B cell (primary cell): ENCODE measurements at regions of chr9 and their contacts with region 1.

Region 1: GRCh38 chr9:90827181-90827871 is 25.7 kb downstream of the SYK start:
- DNase-seq: peak; percentile 86
- ATAC-seq: peak; percentile 68
- H3K4me3 ChIP-seq: peak overlapping the region; percentile 65 to 97 (median 88)
- H3K4me3 Mint-ChIP-seq: peak overlapping the region; percentile 88
- H3K27ac ChIP-seq: peak overlapping the region; percentile 81 to 91
- H3K27ac Mint-ChIP-seq: peak overlapping the region; percentile 86
- H3K4me1 ChIP-seq: peaks cover 72 to 75% of the 10 kb centered on the region in 2 donors
- H3K4me1 Mint-ChIP-seq: peaks cover 89% of the 10 kb centered on the region
- H3K27me3 ChIP-seq: no peaks in the 10 kb centered on the region
- H3K27me3 Mint-ChIP-seq: no peaks in the 10 kb centered on the region
- CTCF ChIP-seq: no peak

Region 2: DNA sequence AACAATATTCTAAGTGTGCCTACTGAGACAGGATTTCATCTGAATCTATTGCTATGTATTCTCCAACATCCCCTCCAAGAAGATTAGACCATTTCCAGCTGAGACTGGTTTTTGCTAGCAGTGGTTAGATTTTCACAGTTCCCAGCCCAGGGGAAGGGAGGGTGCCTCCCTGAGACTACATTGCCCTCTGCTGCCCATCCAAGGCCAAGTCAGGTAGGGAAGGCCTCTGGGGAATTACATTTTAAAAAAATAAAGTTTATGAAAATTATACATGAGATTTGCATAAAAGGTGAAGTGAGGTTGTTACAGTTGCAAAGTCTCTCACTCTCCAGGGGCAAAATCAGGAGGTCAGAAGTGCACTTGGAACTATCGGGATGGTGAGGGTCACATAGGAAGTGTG is 53.7 kb before region 1 on chr9:
- CTCF ChIA-PET with region 1: interaction called, 34 read pairs
- POLR2A ChIA-PET with region 1: interaction called, 9 read pairs
- intact Hi-C with region 1: loop called (anchors 1 kb)
- DNase-seq: peak; percentile 58
- ATAC-seq: peak; percentile 28
- H3K4me3 ChIP-seq: peak overlapping the region in 1 of 5 experiments; percentile 21
- H3K4me3 Mint-ChIP-seq: peak overlapping the region; percentile 38
- H3K27ac ChIP-seq: peak overlapping the region; percentile 37 to 57
- H3K27ac Mint-ChIP-seq: peak overlapping the region; percentile 86
- H3K4me1 ChIP-seq: peaks cover 60 to 67% of the 10 kb centered on the region in 2 donors
- H3K4me1 Mint-ChIP-seq: peaks cover 67% of the 10 kb centered on the region
- H3K27me3 ChIP-seq: no peaks in the 10 kb centered on the region
- H3K27me3 Mint-ChIP-seq: no peaks in the 10 kb centered on the region
- CTCF ChIP-seq: peak; percentile 26

Region 3: GRCh38 chr9:90801583-90802289 is 25.6 kb before region 1 on chr9 and contains the start of gene SYK:
- CTCF ChIA-PET with region 1: interaction called, 44 read pairs
- POLR2A ChIA-PET with region 1: interaction called, 20 read pairs
- intact Hi-C with region 1: loop called (anchors 1 kb)
- DNase-seq: peak; percentile 87
- ATAC-seq: peak; percentile 83
- H3K4me3 ChIP-seq: peak within 1 kb of the TSS; percentile 87 to 98 (median 93)
- H3K4me3 Mint-ChIP-seq: peak within 1 kb of the TSS; percentile 97
- H3K27ac ChIP-seq: peak within 1 kb of the TSS; percentile 87 to 93
- H3K27ac Mint-ChIP-seq: peak within 1 kb of the TSS; percentile 92
- H3K4me1 ChIP-seq: peaks cover 47 to 51% of the 10 kb centered on the region in 2 donors
- H3K4me1 Mint-ChIP-seq: peaks cover 68% of the 10 kb centered on the region
- H3K27me3 ChIP-seq: no peaks in the 10 kb centered on the region
- H3K27me3 Mint-ChIP-seq: no peaks in the 10 kb centered on the region
- CTCF ChIP-seq: no peak
- total RNA-seq, gene SYK: 242 and 251 TPM in 2 replicates

Region 4: DNA sequence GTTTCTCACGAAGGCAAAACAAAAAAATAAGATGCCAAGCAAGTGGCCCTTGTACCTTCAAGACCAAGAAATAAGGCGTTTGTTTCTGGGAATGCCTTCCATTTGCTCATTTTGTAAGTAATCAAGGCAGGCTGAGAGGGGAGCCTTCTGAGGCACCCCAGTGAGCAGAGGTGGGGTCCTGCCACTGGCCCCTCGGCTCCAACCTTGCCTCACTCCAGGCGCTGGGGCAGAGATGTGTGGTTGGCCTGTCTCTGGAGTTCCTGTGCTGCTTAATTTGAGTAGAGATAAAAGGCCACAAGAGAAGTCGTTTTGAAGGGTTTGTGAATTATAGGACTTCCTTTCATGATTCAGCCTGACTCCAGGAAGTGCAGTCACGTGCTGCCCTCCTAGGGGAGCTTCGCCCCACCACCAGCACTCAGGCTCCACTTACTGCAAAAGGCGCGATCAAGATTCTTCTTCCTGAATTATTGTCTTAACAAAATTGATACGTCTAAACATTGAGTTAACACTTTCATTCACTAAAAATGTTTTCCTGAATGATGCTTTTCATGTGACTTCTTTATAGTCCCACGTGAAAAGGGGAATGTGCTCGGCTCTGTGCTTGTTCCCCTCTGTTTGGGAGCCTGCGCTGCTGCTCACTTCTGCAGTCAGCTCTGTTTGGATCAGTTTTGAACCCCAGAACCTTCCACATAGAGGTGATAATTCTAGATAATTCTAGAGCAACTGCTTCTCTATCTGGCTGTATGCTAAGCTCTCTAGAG is 12.0 kb before region 1 on chr9:
- CTCF ChIA-PET with region 1: interaction called, 44 read pairs
- POLR2A ChIA-PET with region 1: interaction called, 21 read pairs
- intact Hi-C with region 1: loop called (anchors 1 kb)
- DNase-seq: peak; percentile 73
- ATAC-seq: peak; percentile 75
- H3K4me3 ChIP-seq: peak overlapping the region in 3 of 5 experiments; percentile 15 to 39 (median 16)
- H3K4me3 Mint-ChIP-seq: peak overlapping the region; percentile 81
- H3K27ac ChIP-seq: peak overlapping the region; percentile 70 to 86
- H3K27ac Mint-ChIP-seq: peak overlapping the region; percentile 98
- H3K4me1 ChIP-seq: peaks cover 65 to 67% of the 10 kb centered on the region in 2 donors
- H3K4me1 Mint-ChIP-seq: peaks cover 90% of the 10 kb centered on the region
- H3K27me3 ChIP-seq: no peaks in the 10 kb centered on the region
- H3K27me3 Mint-ChIP-seq: no peaks in the 10 kb centered on the region
- CTCF ChIP-seq: no peak

Region 5: GRCh38 chr9:90870621-90871326 is 43.4 kb after region 1 on chr9:
- CTCF ChIA-PET with region 1: interaction called, 8 read pairs
- POLR2A ChIA-PET with region 1: no interaction called
- intact Hi-C with region 1: loop called (anchors 5 kb)
- DNase-seq: peak; percentile 70
- ATAC-seq: peak; percentile 39
- H3K4me3 ChIP-seq: no peak overlapping the region
- H3K4me3 Mint-ChIP-seq: no peak overlapping the region
- H3K27ac ChIP-seq: peak overlapping the region in 1 of 2 donors; percentile 44
- H3K27ac Mint-ChIP-seq: no peak overlapping the region
- H3K4me1 ChIP-seq: no peaks in the 10 kb centered on the region
- H3K4me1 Mint-ChIP-seq: peaks cover 1% of the 10 kb centered on the region
- H3K27me3 ChIP-seq: no peaks in the 10 kb centered on the region
- H3K27me3 Mint-ChIP-seq: no peaks in the 10 kb centered on the region
- CTCF ChIP-seq: peak; percentile 99